Heart right ventricle (tissue), 16 donors: ENCODE measurements at regions of chr16 and their contacts with region 1.

Region 1: DNA sequence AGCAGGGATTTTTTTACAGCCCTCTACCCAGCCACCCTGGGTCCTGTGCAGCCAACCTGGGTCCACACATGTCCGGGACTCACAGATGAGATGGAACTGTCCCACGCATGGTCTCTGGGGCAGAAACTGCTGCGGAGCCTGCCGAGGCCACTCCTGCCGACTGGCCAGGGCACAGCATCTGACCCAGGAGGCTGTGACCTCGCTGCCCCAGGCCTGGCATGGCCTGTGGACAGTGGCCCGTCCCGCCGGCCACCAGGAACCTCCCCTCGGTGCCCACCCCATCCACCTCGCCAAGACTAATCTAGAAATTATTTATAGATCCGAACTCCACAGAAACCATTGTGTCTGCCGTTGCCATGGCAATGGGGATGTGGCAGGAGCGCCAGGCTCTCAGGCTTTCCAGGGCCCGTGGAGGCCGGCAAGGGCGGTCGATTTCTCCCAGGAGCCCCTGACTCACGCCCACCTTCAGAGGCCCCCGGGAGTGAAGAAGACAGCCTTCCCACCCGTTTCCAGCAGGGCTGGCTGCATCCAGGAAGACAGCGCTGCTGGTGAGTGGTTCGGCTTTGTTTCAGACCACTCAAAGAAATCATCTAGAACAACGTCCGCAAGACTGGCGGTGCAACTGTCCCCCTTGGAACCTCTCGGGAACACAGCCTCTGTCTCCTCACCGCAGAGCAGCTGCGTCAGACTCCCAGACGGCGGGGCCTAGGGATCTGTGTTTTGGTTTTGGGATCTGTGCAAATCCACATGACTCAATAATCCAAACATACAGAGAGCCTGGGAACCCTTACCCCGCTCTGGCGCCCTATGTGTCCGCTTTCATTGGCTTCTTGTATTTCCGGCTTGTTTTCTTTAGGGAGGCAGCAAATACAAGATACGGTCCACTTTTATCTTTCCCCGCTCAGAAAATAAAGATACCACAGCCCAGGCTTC is 48.4 kb upstream of the ZCCHC14 start:
- DNase-seq: peak; percentile 58 to 61
- ATAC-seq: peak; percentile 48 to 78 (median 70)
- H3K4me3 ChIP-seq: peak overlapping the region in 7 of 10 donors; percentile 11 to 43 (median 31)
- H3K27ac ChIP-seq: peak overlapping the region in 9 of 10 donors; percentile 41 to 77 (median 66)
- H3K4me1 ChIP-seq: peaks cover 0 to 34% (median 16%) of the 10 kb centered on the region in 9 donors
- H3K27me3 ChIP-seq: peaks cover 0 to 36% (median 17%) of the 10 kb centered on the region in 7 donors
- CTCF ChIP-seq: no peak

Region 2: GRCh38 chr16:87316923-87317749 is 224.1 kb before region 1 on chr16 and contains the start of gene C16orf95:
- intact Hi-C with region 1: loop called in 1 of 10 experiments (anchors 2 kb)
- DNase-seq: peak; percentile 95 to 97
- ATAC-seq: peak; percentile 97 to 99 (median 99)
- H3K4me3 ChIP-seq: peak within 1 kb of the TSS; percentile 71 to 99 (median 86)
- H3K27ac ChIP-seq: peak within 1 kb of the TSS; percentile 74 to 98 (median 92)
- H3K4me1 ChIP-seq: peaks cover 0 to 12% (median 9%) of the 10 kb centered on the region in 9 donors
- H3K27me3 ChIP-seq: no peaks in the 10 kb centered on the region
- CTCF ChIP-seq: peak; percentile 41 to 78 (median 66)
- total RNA-seq, gene C16orf95: 2.8 to 5.1 (median 3.8) TPM

Region 3: GRCh38 chr16:87387942-87388817 is 153.0 kb before region 1 on chr16:
- intact Hi-C with region 1: loop called in 1 of 10 experiments (anchors 5 kb)
- DNase-seq: peak; percentile 82 to 97
- ATAC-seq: peak; percentile 59 to 85 (median 74)
- H3K4me3 ChIP-seq: peak overlapping the region in 7 of 10 donors; percentile 23 to 41 (median 29)
- H3K27ac ChIP-seq: peak overlapping the region; percentile 83 to 95 (median 88)
- H3K4me1 ChIP-seq: peaks cover 10 to 45% (median 41%) of the 10 kb centered on the region in 9 donors
- H3K27me3 ChIP-seq: no peaks in the 10 kb centered on the region
- CTCF ChIP-seq: no peak

Region 4: DNA sequence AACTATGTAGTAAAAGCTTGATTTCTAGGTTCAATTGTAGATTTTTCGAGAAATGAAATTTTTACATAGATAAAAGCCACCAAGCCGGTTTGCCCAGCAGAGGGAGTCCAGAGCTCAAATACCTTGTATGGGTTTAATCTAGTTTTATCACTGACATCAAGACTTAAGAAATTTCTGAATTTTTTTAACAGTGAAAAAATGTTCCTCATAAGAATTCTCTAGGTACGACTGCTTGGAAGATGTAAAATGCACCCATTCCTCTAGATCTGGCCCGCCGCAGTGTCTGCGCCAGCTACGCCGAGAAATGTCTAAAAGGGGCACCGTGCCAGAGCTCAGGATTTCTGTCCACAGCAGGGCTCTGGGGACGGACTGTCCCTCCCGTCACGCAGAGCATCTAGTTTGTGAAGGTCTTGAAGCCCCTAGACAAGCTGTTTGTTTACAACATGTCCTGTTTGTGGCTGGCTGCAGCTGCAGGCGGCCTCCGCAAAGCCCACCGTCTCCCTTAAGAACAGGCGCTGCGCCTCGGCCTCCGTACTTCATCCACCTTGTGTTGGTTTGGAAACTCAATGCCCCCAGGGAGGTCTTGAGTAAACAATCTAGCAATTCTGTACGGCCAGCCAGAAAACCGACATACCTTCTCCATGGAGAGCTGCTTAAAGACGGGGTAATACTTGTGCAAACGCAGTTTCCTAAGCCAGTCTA is 124.2 kb before region 1 on chr16:
- intact Hi-C with region 1: loop called in 6 of 10 experiments (anchors 2 to 10 kb)
- DNase-seq: no peak
- ATAC-seq: no peak
- H3K4me3 ChIP-seq: no peak overlapping the region
- H3K27ac ChIP-seq: no peak overlapping the region
- H3K4me1 ChIP-seq: peaks cover 0 to 5% (median 0%) of the 10 kb centered on the region in 9 donors
- H3K27me3 ChIP-seq: no peaks in the 10 kb centered on the region
- CTCF ChIP-seq: peak; percentile 37 to 80 (median 70)